K562 (cell line): ENCODE measurements at regions of chr5 and their contacts with region 1.

Region 1: DNA sequence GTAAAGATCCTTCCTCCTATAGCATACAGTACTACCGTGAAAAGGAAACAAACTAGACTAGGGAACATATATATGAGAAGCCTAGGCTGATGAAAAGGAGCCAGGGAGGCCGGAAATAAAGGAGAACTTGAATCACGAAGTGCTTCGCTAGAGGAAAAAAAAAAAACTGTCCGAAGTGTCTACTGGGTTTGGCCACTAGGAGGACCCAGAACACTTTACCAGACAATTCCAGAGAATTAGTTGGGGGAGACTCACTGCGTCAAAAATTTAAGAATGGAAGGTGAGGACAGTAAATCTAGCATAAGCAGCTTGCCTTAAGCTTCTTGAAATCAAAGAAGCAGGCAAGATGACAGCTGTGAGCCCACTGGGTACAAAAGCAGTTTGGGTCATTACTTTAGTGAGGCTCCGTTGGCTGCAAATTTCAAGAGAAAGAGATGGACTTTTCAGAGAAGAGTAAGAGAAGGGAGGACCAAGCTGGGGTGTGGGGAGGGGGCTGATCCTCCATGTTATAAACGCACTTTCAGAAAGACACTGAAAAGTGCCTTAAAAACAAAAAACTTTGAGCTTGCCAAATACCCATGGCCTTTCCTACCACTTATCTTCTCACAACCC is 47.4 kb downstream of the P4HA2 start:
- DNase-seq: peak; percentile 46 to 87 (median 60)
- ATAC-seq: peak; percentile 64
- H3K4me3 ChIP-seq: peak overlapping the region; percentile 56
- H3K27ac ChIP-seq: peak overlapping the region; percentile 82
- H3K4me1 ChIP-seq: peaks cover 16 to 37% of the 10 kb centered on the region in 2 experiments
- H3K27me3 ChIP-seq: no peaks in the 10 kb centered on the region
- CTCF ChIP-seq: peak; percentile 81 to 94 (median 88)
- EP300 ChIP-seq: peak; percentile 46
- POLR2A ChIP-seq: no peak
- RAD21 ChIP-seq: peak; percentile 66 to 72

Region 2: DNA sequence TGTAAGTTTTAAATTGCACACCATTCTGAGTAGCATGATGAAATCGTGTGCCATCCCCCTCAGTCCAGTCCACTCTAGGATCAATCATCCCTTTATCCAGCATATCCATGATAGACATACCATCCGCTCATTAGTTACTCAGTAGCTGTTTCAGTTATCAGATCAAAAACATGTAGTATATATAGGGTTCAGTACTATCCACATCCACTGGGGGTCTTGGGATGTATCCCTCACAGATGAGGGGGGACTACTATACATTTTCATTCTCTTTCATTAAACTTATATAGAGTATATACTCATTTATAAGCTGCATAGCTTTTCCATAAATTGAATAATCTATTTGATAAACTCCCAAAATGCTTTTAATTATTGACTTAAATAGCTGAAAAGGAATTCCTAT is 302.4 kb before region 1 on chr5:
- CTCF ChIA-PET with region 1: no interaction called
- POLR2A ChIA-PET with region 1: no interaction called
- in situ Hi-C with region 1: no loop called
- intact Hi-C with region 1: no loop called
- DNase-seq: no peak
- ATAC-seq: peak; percentile 81
- H3K4me3 ChIP-seq: no peak overlapping the region
- H3K27ac ChIP-seq: no peak overlapping the region
- H3K4me1 ChIP-seq: no peaks in the 10 kb centered on the region
- H3K27me3 ChIP-seq: no peaks in the 10 kb centered on the region
- CTCF ChIP-seq: no peak
- EP300 ChIP-seq: no peak
- POLR2A ChIP-seq: no peak
- RAD21 ChIP-seq: no peak

Region 3: GRCh38 chr5:132114150-132115121 is 65.8 kb before region 1 on chr5:
- CTCF ChIA-PET with region 1: no interaction called
- POLR2A ChIA-PET with region 1: no interaction called
- in situ Hi-C with region 1: no loop called
- intact Hi-C with region 1: loop called (anchors 2 kb)
- DNase-seq: peak in 3 of 4 experiments; percentile 33 to 81 (median 72)
- ATAC-seq: peak; percentile 87
- H3K4me3 ChIP-seq: no peak overlapping the region
- H3K27ac ChIP-seq: peak overlapping the region; percentile 56
- H3K4me1 ChIP-seq: peaks cover 22 to 30% of the 10 kb centered on the region in 2 experiments
- H3K27me3 ChIP-seq: no peaks in the 10 kb centered on the region
- CTCF ChIP-seq: no peak
- EP300 ChIP-seq: peak; percentile 97
- POLR2A ChIP-seq: no peak
- RAD21 ChIP-seq: peak in 1 of 2 experiments; percentile 42; a peak in 2 of 4 replicates

Region 4: GRCh38 chr5:132277971-132278911 is 98.0 kb after region 1 on chr5:
- CTCF ChIA-PET with region 1: no interaction called
- POLR2A ChIA-PET with region 1: no interaction called
- in situ Hi-C with region 1: no loop called
- intact Hi-C with region 1: loop called (anchors 2 kb)
- DNase-seq: peak; percentile 66 to 90 (median 78)
- ATAC-seq: peak; percentile 89
- H3K4me3 ChIP-seq: no peak overlapping the region
- H3K27ac ChIP-seq: peak overlapping the region; percentile 52
- H3K4me1 ChIP-seq: peaks cover 40 to 44% of the 10 kb centered on the region in 2 experiments; a peak in 4 of 5 replicates
- H3K27me3 ChIP-seq: no peaks in the 10 kb centered on the region
- CTCF ChIP-seq: 0 out of 6 replicates have a peak, but pooled peaks have one; percentile 8 to 25 (median 20)
- EP300 ChIP-seq: no peak
- POLR2A ChIP-seq: no peak
- RAD21 ChIP-seq: 0 out of 4 replicates have a peak, but pooled peaks of 1 of the 2 experiments have one; percentile 18

Region 5: DNA sequence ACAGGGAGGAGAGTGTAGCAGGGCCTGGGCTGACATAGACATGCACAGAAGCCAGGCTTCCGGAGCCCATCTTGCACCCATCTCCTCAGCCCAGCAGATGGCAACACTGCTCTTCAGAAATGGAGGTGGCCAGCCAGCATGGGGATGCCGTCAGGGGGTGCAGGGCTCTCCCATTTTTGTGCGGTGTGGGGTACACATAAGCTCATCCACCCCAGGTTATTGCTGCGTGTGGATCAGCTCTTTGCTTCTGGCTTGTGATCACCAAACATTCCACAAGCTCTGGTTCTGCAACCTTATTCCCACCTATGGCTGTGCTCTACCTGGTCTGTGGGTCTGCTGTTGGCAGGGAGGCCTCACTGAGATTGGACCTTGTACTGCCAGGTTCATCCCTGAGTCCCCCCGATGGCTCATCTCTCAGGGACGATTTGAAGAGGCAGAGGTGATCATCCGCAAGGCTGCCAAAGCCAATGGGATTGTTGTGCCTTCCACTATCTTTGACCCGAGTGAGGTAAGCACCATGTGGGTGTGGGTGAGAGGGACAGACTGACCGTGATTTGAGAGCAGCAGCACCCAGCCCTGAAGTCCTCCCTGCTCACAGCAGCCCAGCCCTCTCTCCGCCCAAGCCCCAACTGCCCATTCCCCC is 206.5 kb after region 1 on chr5:
- CTCF ChIA-PET with region 1: no interaction called
- POLR2A ChIA-PET with region 1: no interaction called
- in situ Hi-C with region 1: no loop called
- intact Hi-C with region 1: loop called (anchors 10 kb)
- DNase-seq: peak; percentile 51 to 74 (median 67)
- ATAC-seq: peak; percentile 96
- H3K4me3 ChIP-seq: no peak overlapping the region
- H3K27ac ChIP-seq: no peak overlapping the region
- H3K4me1 ChIP-seq: peaks cover 10 to 12% of the 10 kb centered on the region in 2 experiments; a peak in 3 of 5 replicates
- H3K27me3 ChIP-seq: no peaks in the 10 kb centered on the region
- CTCF ChIP-seq: peak; percentile 81 to 87 (median 82)
- EP300 ChIP-seq: no peak
- POLR2A ChIP-seq: no peak
- RAD21 ChIP-seq: peak; percentile 92 to 95

Region 6: DNA sequence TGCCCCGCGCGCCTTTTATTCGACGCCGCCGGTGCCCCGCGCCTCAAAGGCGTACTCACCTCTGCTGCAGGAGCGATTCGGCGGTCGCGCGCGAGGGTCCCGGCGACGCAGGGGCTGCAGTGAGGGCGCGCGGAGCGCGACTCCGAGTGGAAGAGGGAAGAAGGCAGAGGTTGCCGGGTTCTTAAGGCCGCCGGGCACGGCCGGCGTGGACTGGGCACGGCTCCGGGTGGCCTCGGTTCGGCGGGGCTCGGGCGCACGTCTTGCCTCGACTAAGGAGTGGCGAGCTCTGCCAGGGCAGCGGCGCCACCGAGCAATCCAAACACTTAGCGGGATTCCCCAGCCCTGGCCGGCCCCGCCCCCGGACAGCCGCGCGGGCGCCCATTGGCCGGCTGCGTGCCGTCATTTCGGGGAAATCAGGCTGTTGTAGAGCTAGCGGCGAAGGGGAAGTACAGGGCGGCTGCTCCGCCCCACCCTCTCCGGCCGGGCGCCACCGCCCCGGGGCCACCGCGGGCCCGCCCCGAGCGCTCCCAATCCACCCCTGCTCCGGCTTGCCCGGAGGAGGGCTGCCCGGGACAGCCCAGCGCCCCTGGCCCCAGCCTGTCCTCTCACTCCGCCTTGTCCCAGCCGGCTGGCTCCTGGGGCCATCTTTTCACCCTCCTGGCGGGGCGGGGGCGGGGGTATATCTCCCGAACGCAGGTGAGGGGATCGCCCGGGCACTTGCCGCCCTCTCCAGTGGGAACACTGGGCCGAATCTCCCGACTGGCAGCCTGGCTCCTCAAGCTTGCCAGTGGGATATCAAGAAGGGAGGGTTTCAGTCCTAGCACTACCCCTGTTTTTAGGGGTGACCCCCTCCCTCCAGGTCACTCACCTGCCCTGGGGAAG is 310.5 kb after region 1 on chr5 and contains the start of gene IRF1:
- CTCF ChIA-PET with region 1: no interaction called
- POLR2A ChIA-PET with region 1: no interaction called
- in situ Hi-C with region 1: loop called (anchors 10 kb)
- intact Hi-C with region 1: no loop called
- DNase-seq: peak; percentile 95 to 97 (median 96)
- ATAC-seq: peak; percentile 94
- H3K4me3 ChIP-seq: peak within 1 kb of the TSS; percentile 76
- H3K27ac ChIP-seq: peak within 1 kb of the TSS; percentile 84
- H3K4me1 ChIP-seq: peaks cover 40 to 51% of the 10 kb centered on the region in 2 experiments
- H3K27me3 ChIP-seq: no peaks in the 10 kb centered on the region
- CTCF ChIP-seq: peak in 2 of 3 experiments; percentile 15 to 21; a peak in 2 of 6 replicates
- EP300 ChIP-seq: no peak
- POLR2A ChIP-seq: peak; percentile 85
- RAD21 ChIP-seq: 0 out of 4 replicates have a peak, but pooled peaks of 1 of the 2 experiments have one; percentile 5
- polyA plus RNA-seq, gene IRF1: 1.1 to 1.3 TPM